Mammary epithelial cell (primary cell): ENCODE measurements at regions of chr5 and their contacts with region 1.

Region 1: GRCh38 chr5:21774791-21775190 is 1078.4 kb downstream of the CDH12 start:
- DNase-seq: peak; percentile 95
- H3K4me3 ChIP-seq: no peak overlapping the region
- H3K27ac ChIP-seq: peak overlapping the region; percentile 65
- H3K4me1 ChIP-seq: peaks cover 25% of the 10 kb centered on the region
- H3K27me3 ChIP-seq: no peaks in the 10 kb centered on the region
- CTCF ChIP-seq: no peak

Region 2: DNA sequence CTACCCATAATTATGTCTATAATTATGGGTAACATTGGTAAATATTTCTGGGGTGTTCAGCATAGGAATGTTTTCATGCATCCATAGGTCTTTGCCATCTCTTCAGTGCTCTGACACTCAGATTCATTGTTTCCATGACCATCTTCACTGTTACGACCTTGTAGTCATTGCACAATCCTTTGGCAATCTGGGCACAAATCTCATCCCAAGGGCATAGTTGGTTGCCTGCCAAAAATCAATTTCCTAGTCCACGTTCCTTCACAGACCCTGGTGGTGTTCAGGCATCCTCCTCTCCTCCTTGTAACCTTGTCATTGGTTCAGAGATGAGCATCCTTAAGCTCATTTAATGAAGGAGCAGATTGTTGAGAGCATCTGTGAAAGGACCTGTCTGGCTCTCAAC is 322.3 kb before region 1 on chr5:
- CTCF ChIA-PET with region 1: no interaction called
- dilution Hi-C with region 1: no loop called
- in situ Hi-C with region 1: loop called in 1 of 2 experiments (anchors 25 kb)
- intact Hi-C with region 1: no loop called
- DNase-seq: no peak
- H3K4me3 ChIP-seq: no peak overlapping the region
- H3K27ac ChIP-seq: no peak overlapping the region
- H3K4me1 ChIP-seq: no peaks in the 10 kb centered on the region
- H3K27me3 ChIP-seq: no peaks in the 10 kb centered on the region
- CTCF ChIP-seq: no peak

Region 3: DNA sequence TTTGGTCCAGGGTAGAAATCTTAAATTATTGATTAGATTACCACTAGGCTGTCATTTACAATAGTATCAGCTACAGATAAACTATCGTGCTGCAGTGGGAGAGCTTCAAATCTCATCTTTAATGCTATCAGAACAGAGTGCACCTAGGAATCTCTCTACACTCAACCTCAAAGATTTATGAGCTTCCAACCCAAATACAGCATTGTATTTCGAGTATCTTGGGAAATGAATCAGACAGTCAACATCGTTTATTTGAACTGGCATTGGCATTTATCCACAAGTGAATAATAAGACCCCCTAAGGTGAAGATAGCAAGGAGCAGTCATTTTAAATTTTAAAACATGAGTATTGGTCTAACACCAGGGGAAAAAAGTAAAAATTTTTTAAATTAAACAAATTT is 124.8 kb before region 1 on chr5:
- CTCF ChIA-PET with region 1: no interaction called
- dilution Hi-C with region 1: no loop called
- in situ Hi-C with region 1: no loop called
- intact Hi-C with region 1: no loop called
- DNase-seq: no peak
- H3K4me3 ChIP-seq: no peak overlapping the region
- H3K27ac ChIP-seq: no peak overlapping the region
- H3K4me1 ChIP-seq: no peaks in the 10 kb centered on the region
- H3K27me3 ChIP-seq: no peaks in the 10 kb centered on the region
- CTCF ChIP-seq: no peak

Region 4: GRCh38 chr5:21685536-21685935 is 89.3 kb before region 1 on chr5:
- CTCF ChIA-PET with region 1: no interaction called
- dilution Hi-C with region 1: loop called (anchors 5 kb)
- in situ Hi-C with region 1: no loop called
- intact Hi-C with region 1: no loop called
- DNase-seq: peak; percentile 44
- H3K4me3 ChIP-seq: no peak overlapping the region
- H3K27ac ChIP-seq: no peak overlapping the region
- H3K4me1 ChIP-seq: peaks cover 19% of the 10 kb centered on the region
- H3K27me3 ChIP-seq: no peaks in the 10 kb centered on the region
- CTCF ChIP-seq: no peak

Region 5: DNA sequence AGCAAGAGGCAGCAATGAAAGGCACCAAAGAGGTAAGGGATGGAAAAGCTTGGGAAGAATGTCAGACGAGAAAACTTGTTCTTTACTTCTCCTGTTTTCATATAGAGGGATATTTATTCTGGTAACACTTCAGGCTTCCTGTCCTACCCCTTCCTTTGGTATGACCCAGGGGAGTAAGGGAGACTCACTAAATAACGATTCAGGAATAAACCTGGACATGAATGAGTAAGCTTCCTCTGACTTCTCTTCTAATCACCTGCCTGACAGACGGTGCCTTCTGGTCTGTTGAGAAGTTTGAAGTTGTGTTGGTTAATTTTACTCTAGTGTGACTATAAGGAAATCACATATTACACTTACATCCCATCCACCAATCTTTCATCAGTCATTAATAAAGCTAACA is 617.2 kb after region 1 on chr5:
- CTCF ChIA-PET with region 1: no interaction called
- dilution Hi-C with region 1: no loop called
- in situ Hi-C with region 1: no loop called
- intact Hi-C with region 1: no loop called
- DNase-seq: no peak
- H3K4me3 ChIP-seq: no peak overlapping the region
- H3K27ac ChIP-seq: no peak overlapping the region
- H3K4me1 ChIP-seq: no peaks in the 10 kb centered on the region
- H3K27me3 ChIP-seq: no peaks in the 10 kb centered on the region
- CTCF ChIP-seq: no peak